ENCODE measurements at regions of chr18 and their contacts with region 1.

Region 1: DNA sequence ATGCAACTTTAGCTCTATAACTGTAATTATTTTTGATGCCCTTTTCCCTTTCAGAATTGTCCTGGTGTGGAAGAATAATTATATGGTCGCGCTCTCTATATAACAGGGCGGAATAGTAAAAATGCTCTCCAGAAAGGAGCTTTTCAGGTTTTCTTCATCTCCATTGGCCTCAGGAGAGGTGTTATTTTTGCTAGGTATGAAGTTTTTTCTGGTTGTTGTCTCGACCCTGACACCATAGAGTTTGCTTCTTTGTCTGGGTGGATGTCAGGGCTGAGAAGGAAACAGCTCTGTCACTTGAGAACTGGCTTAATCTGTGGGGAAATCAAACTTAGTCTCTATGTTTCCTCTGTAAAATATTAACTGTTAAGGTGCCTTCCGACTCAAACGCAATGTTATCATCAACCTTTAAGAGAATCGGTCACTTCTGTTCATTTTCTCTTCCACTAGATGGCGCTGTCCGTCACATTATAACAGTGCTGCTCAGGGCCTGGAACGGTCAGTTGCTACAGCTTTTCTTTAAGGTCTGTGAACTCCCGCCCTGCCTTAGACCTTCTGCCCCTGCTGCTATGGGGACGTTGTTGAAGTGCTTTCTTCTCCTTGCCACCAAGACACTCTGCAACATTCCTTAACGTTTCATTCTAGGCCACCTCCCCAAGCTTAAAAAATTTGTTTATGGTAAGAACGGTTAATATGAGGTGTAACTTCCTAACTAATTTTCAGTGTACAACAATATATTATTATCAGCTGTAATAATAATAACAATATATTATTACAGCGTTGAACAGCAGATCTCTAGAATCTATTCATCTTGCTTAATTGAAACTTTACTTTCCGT is 23.8 kb upstream of the SERPINB12 start:
- DNase-seq: no peak
- H3K4me3 ChIP-seq: no peak overlapping the region
- H3K27me3 ChIP-seq: no peaks in the 10 kb centered on the region
- CTCF ChIP-seq: peak; percentile 54

Region 2: DNA sequence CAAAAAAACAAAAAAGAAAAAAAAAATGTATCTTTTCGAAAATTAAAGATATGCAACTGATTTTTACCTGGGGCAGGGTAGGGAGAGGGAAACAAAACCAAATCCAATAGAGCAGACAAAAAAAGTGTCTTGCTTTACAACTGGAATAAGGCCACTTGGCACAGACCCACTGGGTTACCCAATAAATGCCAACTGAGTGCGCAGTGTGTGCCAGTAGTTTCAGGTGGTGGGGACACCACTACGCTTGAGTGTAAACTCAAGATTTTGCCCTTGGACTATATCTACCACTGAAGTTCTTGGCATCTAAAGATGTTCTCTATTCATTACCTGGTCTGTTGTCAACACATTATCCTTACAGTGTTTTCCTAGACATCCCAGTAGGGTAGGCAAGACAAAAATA is 112.4 kb before region 1 on chr18:
- CTCF ChIA-PET with region 1: no interaction called
- POLR2A ChIA-PET with region 1: no interaction called
- DNase-seq: no peak
- H3K4me3 ChIP-seq: no peak overlapping the region
- H3K27me3 ChIP-seq: no peaks in the 10 kb centered on the region
- CTCF ChIP-seq: no peak

Region 3: GRCh38 chr18:63539904-63540510 is 21.6 kb after region 1 on chr18:
- CTCF ChIA-PET with region 1: interaction called, 15 read pairs
- POLR2A ChIA-PET with region 1: no interaction called
- DNase-seq: peak; percentile 26
- H3K4me3 ChIP-seq: no peak overlapping the region
- H3K27me3 ChIP-seq: no peaks in the 10 kb centered on the region
- CTCF ChIP-seq: no peak

Region 4: DNA sequence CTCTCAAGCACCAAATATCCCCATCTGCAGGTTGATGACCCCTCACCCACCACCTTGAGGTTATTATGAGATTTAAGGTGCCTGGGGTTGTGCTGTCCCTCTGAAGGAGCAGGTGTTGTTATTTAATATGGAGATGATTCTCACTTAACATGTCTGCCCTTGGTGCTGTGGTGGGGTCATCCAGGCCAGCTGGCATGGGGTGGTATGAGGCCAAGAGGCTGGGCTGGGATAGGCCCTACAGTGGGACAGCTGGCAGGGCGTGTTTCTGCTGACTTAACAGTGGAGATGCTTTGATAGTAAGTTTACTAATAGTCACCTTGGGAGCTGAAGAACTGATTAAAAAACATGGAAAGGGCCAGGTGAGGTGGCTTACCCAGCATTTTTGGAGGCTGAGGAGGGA is 46.2 kb after region 1 on chr18:
- CTCF ChIA-PET with region 1: interaction called, 38 read pairs
- POLR2A ChIA-PET with region 1: no interaction called
- DNase-seq: no peak
- H3K4me3 ChIP-seq: no peak overlapping the region
- H3K27me3 ChIP-seq: no peaks in the 10 kb centered on the region
- CTCF ChIP-seq: no peak

Region 5: GRCh38 chr18:63741769-63742168 is 223.4 kb after region 1 on chr18:
- CTCF ChIA-PET with region 1: interaction called, 117 read pairs
- POLR2A ChIA-PET with region 1: no interaction called
- DNase-seq: no peak
- H3K4me3 ChIP-seq: no peak overlapping the region
- H3K27me3 ChIP-seq: no peaks in the 10 kb centered on the region
- CTCF ChIP-seq: peak; percentile 63

Region 6: DNA sequence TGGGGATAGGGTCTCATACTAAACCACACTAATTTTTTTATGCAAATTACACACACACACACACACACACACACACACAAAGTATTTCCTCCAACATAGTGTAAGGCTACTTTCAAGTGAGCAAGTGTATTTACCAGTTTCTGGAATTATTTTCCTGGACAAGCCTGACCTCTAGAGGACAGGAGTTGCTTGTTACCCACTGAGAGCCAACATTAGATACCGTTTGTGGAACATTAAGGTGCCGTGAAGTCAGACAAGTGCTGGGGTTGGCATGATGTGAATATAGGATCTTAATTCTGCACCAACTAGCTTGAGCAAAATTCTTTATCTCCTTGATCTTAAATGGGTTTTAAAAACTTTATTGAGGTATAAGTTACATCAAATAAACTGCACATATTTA is 329.8 kb after region 1 on chr18:
- CTCF ChIA-PET with region 1: interaction called, 99 read pairs
- POLR2A ChIA-PET with region 1: no interaction called
- DNase-seq: no peak
- H3K4me3 ChIP-seq: no peak overlapping the region
- H3K27me3 ChIP-seq: no peaks in the 10 kb centered on the region
- CTCF ChIP-seq: peak; percentile 73